A673 (cell line): ENCODE measurements at regions of chr9 and their contacts with region 1.

Region 1: DNA sequence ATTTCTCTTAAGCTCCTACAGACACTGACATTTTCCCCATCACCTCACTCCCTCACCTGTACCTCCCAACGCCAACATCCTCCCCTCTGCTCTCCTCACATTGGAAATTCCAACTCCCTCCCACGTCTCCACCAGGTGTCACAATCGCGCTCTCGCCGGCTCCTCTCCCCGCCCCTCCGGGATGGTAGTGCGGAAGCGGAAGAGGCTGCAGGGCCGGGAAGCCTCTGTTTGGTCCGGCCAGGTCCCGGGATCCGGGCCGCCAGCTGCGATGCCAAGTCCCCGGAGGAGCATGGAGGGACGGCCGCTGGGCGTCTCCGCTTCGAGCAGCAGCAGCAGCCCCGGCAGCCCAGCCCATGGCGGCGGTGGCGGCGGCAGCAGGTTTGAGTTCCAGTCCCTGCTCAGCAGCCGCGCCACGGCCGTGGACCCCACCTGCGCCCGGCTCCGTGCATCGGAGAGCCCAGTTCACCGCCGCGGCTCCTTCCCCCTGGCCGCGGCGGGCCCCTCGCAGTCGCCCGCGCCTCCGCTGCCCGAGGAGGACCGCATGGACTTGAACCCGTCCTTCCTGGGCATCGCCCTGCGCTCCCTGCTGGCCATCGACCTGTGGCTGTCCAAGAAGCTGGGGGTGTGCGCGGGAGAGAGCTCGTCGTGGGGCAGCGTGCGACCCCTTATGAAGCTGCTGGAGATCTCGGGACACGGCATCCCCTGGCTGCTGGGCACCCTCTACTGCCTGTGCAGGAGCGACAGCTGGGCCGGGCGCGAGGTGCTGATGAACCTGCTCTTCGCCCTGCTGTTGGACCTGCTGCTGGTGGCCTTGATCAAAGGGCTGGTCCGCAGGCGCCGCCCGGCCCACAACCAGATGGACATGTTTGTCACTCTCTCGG is at the start of gene PLPP6:
- DNase-seq: peak; percentile 93
- H3K4me3 ChIP-seq: peak within 1 kb of the TSS; percentile 79
- H3K27ac ChIP-seq: peak within 1 kb of the TSS; percentile 98
- H3K4me1 ChIP-seq: peaks cover 28% of the 10 kb centered on the region
- H3K27me3 ChIP-seq: no peaks in the 10 kb centered on the region
- CTCF ChIP-seq: peak; percentile 57
- total RNA-seq, gene PLPP6: 30.9 and 39.5 TPM in 2 replicates

Region 2: GRCh38 chr9:4679268-4680172 is 17.2 kb after region 1 on chr9 and contains the start of gene CDC37L1:
- CTCF ChIA-PET with region 1: no interaction called
- POLR2A ChIA-PET with region 1: interaction called, 10 read pairs
- intact Hi-C with region 1: loop called (anchors 1 kb)
- DNase-seq: peak; percentile 98
- H3K4me3 ChIP-seq: peak within 1 kb of the TSS; percentile 83
- H3K27ac ChIP-seq: peak within 1 kb of the TSS; percentile 98
- H3K4me1 ChIP-seq: peaks cover 20% of the 10 kb centered on the region
- H3K27me3 ChIP-seq: no peaks in the 10 kb centered on the region
- CTCF ChIP-seq: peak; percentile 63
- total RNA-seq, gene CDC37L1: 26.8 and 28.7 TPM in 2 replicates

Region 3: GRCh38 chr9:4713849-4714248 is 51.5 kb after region 1 on chr9:
- CTCF ChIA-PET with region 1: no interaction called
- POLR2A ChIA-PET with region 1: no interaction called
- intact Hi-C with region 1: no loop called
- DNase-seq: no peak
- H3K4me3 ChIP-seq: no peak overlapping the region
- H3K27ac ChIP-seq: no peak overlapping the region
- H3K4me1 ChIP-seq: peaks cover 6% of the 10 kb centered on the region
- H3K27me3 ChIP-seq: no peaks in the 10 kb centered on the region
- CTCF ChIP-seq: no peak

Region 4: GRCh38 chr9:4946937-4947336 is 284.6 kb after region 1 on chr9:
- CTCF ChIA-PET with region 1: no interaction called
- POLR2A ChIA-PET with region 1: no interaction called
- intact Hi-C with region 1: no loop called
- DNase-seq: no peak
- H3K4me3 ChIP-seq: no peak overlapping the region
- H3K27ac ChIP-seq: no peak overlapping the region
- H3K4me1 ChIP-seq: no peaks in the 10 kb centered on the region
- H3K27me3 ChIP-seq: no peaks in the 10 kb centered on the region
- CTCF ChIP-seq: no peak

Region 5: GRCh38 chr9:4979239-4979638 is 316.9 kb after region 1 on chr9:
- CTCF ChIA-PET with region 1: no interaction called
- POLR2A ChIA-PET with region 1: no interaction called
- intact Hi-C with region 1: no loop called
- DNase-seq: peak; percentile 21
- H3K4me3 ChIP-seq: no peak overlapping the region
- H3K27ac ChIP-seq: no peak overlapping the region
- H3K4me1 ChIP-seq: peaks cover 15% of the 10 kb centered on the region
- H3K27me3 ChIP-seq: no peaks in the 10 kb centered on the region
- CTCF ChIP-seq: no peak

Region 6: GRCh38 chr9:5146241-5146908 is 484.0 kb after region 1 on chr9:
- CTCF ChIA-PET with region 1: no interaction called
- POLR2A ChIA-PET with region 1: no interaction called
- intact Hi-C with region 1: no loop called
- DNase-seq: no peak
- H3K4me3 ChIP-seq: no peak overlapping the region
- H3K27ac ChIP-seq: no peak overlapping the region
- H3K4me1 ChIP-seq: no peaks in the 10 kb centered on the region
- H3K27me3 ChIP-seq: no peaks in the 10 kb centered on the region
- CTCF ChIP-seq: no peak